ENCODE measurements at regions of chr7 and their contacts with region 1.

Region 1: DNA sequence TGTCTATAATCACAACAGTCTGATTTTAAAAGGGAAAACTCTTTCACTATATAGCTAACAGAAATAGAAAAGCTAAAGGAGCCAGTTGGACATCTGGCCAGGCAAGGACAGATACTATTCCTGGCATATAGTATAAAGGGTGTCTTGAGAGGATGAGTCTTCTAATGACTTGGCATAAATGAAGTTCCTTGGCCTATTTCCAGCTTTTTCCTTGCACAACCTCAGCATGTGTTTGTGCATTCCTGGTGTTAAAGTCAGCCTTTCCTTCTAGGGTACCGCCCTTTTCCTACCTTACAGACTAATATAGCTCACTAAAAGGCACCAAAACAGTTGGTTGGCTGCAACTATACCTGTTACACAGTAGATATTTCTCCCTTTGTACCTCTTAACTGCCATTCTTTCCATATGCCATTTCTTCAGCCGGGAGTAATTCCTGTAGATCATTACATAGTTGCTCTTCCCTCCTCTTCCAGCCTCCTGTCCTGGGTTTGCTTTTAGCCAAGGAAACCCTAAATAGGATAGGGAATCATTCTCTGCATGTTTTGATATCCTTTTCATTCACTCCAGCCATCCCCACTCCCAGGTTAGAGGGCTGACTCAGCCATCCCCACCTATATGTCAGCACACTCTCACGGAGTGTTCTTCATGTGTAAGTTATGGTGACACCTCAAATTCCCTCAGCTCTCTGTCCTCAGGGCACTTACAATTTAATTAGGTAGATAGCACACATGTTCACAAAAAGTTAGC is 102.1 kb upstream of the MDFIC start:
- DNase-seq: no peak
- H3K4me3 ChIP-seq: no peak overlapping the region
- H3K27ac ChIP-seq: no peak overlapping the region
- H3K4me1 ChIP-seq: peaks cover 0 to 21% (median 10%) of the 10 kb centered on the region in 4 donors
- H3K27me3 ChIP-seq: no peaks in the 10 kb centered on the region
- CTCF ChIP-seq: no peak

Region 2: DNA sequence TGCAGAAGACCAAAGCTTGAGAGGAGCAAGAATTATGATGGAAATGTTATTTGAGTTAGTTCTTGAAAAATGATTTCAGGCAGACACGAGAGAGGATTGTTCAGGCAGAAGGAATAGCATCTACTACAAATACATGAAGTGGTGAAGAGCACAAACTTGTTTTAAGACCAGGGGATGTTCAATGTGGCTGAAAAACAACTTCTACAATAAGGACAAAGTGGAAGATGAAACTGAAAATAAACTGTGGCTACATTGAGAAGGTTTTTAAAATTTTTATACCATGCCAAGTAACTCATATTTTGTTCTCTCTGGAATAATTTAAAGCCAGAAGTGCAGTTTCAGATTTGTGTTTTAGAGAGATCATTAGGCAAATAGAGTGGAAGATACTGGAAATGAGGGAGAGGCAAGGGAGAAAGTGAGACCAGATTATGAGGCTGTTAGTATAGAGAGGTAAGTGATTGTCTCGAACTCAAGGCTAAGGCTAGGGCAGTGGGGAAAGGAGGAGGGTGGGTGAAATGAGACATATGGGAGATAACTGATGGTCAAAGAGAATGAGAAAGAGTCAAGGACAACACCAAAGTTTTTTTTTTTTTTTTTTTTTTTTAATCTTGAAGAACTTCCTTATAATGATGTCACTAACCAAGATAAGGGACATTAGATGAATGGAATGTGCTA is 217.5 kb after region 1 on chr7:
- intact Hi-C with region 1: no loop called
- DNase-seq: no peak
- H3K4me3 ChIP-seq: no peak overlapping the region
- H3K27ac ChIP-seq: no peak overlapping the region
- H3K4me1 ChIP-seq: no peaks in the 10 kb centered on the region
- H3K27me3 ChIP-seq: no peaks in the 10 kb centered on the region
- CTCF ChIP-seq: no peak

Region 3: DNA sequence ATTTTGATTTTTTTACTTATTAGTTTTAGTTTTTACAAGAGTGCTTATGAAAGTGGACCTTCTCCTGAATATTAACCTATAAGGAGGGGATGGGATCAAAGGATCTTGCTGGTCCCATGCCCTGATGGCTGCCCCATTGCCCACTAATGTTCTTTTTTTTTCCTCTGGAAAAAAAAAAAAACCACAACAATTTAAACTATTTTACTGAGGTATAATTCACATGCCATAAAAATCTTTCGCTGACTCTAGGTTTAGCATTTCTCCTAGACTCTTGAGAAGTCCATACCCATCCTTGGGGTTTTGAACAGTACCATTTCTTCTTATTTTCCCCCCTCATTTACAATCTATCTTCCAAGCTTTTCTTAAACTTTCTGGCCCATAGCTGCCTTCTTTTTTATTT is 729.0 kb after region 1 on chr7:
- intact Hi-C with region 1: loop called (anchors 5 kb)
- DNase-seq: no peak
- H3K4me3 ChIP-seq: no peak overlapping the region
- H3K27ac ChIP-seq: no peak overlapping the region
- H3K4me1 ChIP-seq: no peaks in the 10 kb centered on the region
- H3K27me3 ChIP-seq: no peaks in the 10 kb centered on the region
- CTCF ChIP-seq: no peak

Measured in tibial artery (tissue), 4 donors.